ENCODE measurements at regions of chr2 and their contacts with region 1.

Region 1: GRCh38 chr2:128362846-128363228 is 44.2 kb upstream of the HS6ST1 start:
- DNase-seq: peak in 1 of 2 donors; percentile 79
- H3K4me3 ChIP-seq: no peak overlapping the region
- H3K27ac ChIP-seq: peak overlapping the region; percentile 39 to 76
- H3K4me1 ChIP-seq: peaks cover 0 to 19% of the 10 kb centered on the region in 2 donors
- H3K27me3 ChIP-seq: no peaks in the 10 kb centered on the region
- CTCF ChIP-seq: no peak

Region 2: GRCh38 chr2:128422571-128422970 is 59.7 kb after region 1 on chr2:
- intact Hi-C with region 1: loop called (anchors 5 kb)
- DNase-seq: peak in 1 of 2 donors; percentile 79
- H3K4me3 ChIP-seq: peak overlapping the region in 1 of 2 donors; percentile 8
- H3K27ac ChIP-seq: peak overlapping the region; percentile 88 to 89
- H3K4me1 ChIP-seq: peaks cover 5 to 35% of the 10 kb centered on the region in 2 donors
- H3K27me3 ChIP-seq: no peaks in the 10 kb centered on the region
- CTCF ChIP-seq: no peak

Region 3: GRCh38 chr2:128442053-128442751 is 79.4 kb after region 1 on chr2:
- intact Hi-C with region 1: no loop called
- DNase-seq: peak in 1 of 2 donors; percentile 64
- H3K4me3 ChIP-seq: no peak overlapping the region
- H3K27ac ChIP-seq: no peak overlapping the region
- H3K4me1 ChIP-seq: peaks cover 0 to 9% of the 10 kb centered on the region in 2 donors
- H3K27me3 ChIP-seq: no peaks in the 10 kb centered on the region
- CTCF ChIP-seq: no peak

Region 4: DNA sequence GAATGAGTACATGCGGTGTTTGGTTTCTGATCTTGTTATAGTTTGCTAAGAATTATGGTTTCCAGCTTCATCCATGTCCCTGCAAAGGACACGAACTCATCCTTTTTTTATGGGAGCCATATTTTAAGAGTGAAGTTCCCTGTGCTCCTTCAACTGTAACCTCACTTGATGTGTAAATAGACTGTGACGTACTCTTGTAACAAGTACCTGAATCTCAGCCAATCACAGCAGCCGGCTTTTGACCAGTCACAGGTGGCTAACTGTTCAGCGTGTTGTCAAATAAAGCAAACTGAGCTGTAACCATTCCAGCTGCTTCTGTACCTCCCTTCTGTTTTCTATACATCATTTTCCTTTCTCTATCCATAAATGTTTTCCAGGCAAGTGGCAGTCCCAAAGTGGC is 730.1 kb after region 1 on chr2:
- intact Hi-C with region 1: no loop called
- DNase-seq: no peak
- H3K4me3 ChIP-seq: no peak overlapping the region
- H3K27ac ChIP-seq: no peak overlapping the region
- H3K4me1 ChIP-seq: no peaks in the 10 kb centered on the region
- H3K27me3 ChIP-seq: no peaks in the 10 kb centered on the region
- CTCF ChIP-seq: no peak

Measured in ascending aorta (tissue), 2 donors.